Heart right ventricle (tissue), 16 donors: ENCODE measurements at regions of chr2 and their contacts with region 1.

Region 1: DNA sequence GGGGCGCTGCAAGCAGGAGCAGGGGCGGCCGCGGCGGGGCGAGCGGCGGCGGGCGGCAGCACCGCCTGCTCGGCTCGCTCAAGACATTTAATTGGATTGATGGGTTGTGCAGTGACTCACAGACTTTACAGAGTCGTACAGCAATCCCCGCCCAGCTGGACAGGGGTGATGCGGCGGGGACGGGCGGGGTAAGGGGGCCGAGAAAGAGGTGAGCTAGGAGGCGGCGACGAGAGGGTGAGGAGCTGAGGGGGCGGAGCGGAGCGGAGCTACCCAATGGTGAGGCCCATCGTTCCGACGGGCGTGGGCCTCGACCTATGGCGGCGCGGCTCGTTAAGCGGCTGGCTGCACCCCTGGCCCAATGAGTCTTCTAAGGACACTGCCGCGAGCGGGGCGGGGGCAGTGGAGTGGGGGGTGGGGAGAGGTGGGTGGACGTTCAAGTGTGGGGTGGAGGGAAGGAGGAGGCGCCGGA is 97.1 kb upstream of the SERTAD2 start:
- DNase-seq: peak; percentile 99
- ATAC-seq: peak; percentile 90 to 97 (median 94)
- H3K4me3 ChIP-seq: peak overlapping the region; percentile 59 to 94 (median 74)
- H3K27ac ChIP-seq: peak overlapping the region; percentile 82 to 100 (median 96)
- H3K4me1 ChIP-seq: peaks cover 0 to 34% (median 19%) of the 10 kb centered on the region in 9 donors
- H3K27me3 ChIP-seq: no peaks in the 10 kb centered on the region
- CTCF ChIP-seq: peak in 3 of 9 donors; percentile 37 to 53 (median 40)

Region 2: GRCh38 chr2:64523666-64524603 is 226.9 kb before region 1 on chr2 and contains the start of gene AFTPH:
- intact Hi-C with region 1: loop called in 1 of 10 experiments (anchors 5 kb)
- DNase-seq: peak; percentile 99
- ATAC-seq: peak; percentile 99 to 100 (median 100)
- H3K4me3 ChIP-seq: peak within 1 kb of the TSS; percentile 74 to 98 (median 92)
- H3K27ac ChIP-seq: peak within 1 kb of the TSS; percentile 75 to 98 (median 94)
- H3K4me1 ChIP-seq: peaks cover 0 to 49% (median 34%) of the 10 kb centered on the region in 9 donors
- H3K27me3 ChIP-seq: no peaks in the 10 kb centered on the region
- CTCF ChIP-seq: peak in 1 of 9 donors; percentile 13
- total RNA-seq, gene AFTPH: 9.8 to 12.8 (median 11.0) TPM

Region 3: GRCh38 chr2:64653349-64654062 is 97.3 kb before region 1 on chr2 and contains the start of gene SERTAD2:
- intact Hi-C with region 1: loop called in 8 of 10 experiments (anchors 1 to 5 kb)
- DNase-seq: peak; percentile 90 to 92
- ATAC-seq: peak; percentile 89 to 93 (median 92)
- H3K4me3 ChIP-seq: peak within 1 kb of the TSS; percentile 65 to 99 (median 87)
- H3K27ac ChIP-seq: peak within 1 kb of the TSS; percentile 92 to 100 (median 99)
- H3K4me1 ChIP-seq: peaks cover 0 to 75% (median 57%) of the 10 kb centered on the region in 9 donors
- H3K27me3 ChIP-seq: no peaks in the 10 kb centered on the region
- CTCF ChIP-seq: peak in 6 of 9 donors; percentile 4 to 31 (median 24)
- total RNA-seq, gene SERTAD2: 11.3 to 20.9 (median 16.6) TPM

Region 4: DNA sequence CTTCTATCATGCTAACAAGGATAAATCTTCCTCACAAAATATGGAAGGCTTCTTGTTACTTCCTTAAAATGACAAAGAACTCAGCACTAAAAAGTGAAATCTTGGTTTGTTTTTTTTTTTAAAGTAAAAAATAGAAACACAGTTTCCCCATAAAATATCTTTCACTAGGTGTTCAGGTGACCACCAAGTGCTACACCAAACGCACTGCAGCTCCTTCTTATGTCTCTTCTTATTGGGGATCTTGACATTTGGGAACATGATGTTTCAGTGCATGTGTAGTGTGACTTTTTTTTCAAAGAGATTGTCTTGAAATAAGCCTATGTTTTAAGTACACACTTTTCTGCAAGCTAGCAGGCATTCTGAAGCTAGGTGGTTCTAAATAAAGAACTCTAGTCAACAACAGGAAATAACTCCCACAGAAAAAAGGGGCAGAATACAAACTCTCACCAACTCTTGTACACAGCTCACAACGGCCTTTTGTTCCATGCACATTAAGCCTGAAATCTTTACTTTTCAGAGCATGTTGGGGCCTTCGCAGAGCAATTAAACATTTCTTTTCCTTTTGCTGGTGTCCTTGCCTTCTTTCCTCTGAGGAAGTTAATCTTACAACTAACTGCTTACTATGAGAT is 83.9 kb before region 1 on chr2:
- intact Hi-C with region 1: loop called in 1 of 10 experiments (anchors 10 kb)
- DNase-seq: no peak
- ATAC-seq: peak in 2 of 8 donors; percentile 39 to 44
- H3K4me3 ChIP-seq: no peak overlapping the region
- H3K27ac ChIP-seq: peak overlapping the region in 4 of 10 donors; percentile 35 to 68 (median 48)
- H3K4me1 ChIP-seq: peaks cover 0 to 29% (median 17%) of the 10 kb centered on the region in 9 donors
- H3K27me3 ChIP-seq: no peaks in the 10 kb centered on the region
- CTCF ChIP-seq: no peak

Region 5: GRCh38 chr2:64767670-64768468 is 17.0 kb after region 1 on chr2:
- intact Hi-C with region 1: loop called in 5 of 10 experiments (anchors 1 to 2 kb)
- DNase-seq: peak; percentile 89 to 94
- ATAC-seq: peak; percentile 95 to 99 (median 96)
- H3K4me3 ChIP-seq: peak overlapping the region; percentile 26 to 75 (median 70)
- H3K27ac ChIP-seq: peak overlapping the region; percentile 95 to 99 (median 98)
- H3K4me1 ChIP-seq: peaks cover 0 to 36% (median 17%) of the 10 kb centered on the region in 9 donors
- H3K27me3 ChIP-seq: no peaks in the 10 kb centered on the region
- CTCF ChIP-seq: peak in 2 of 9 donors; percentile 10 to 35

Region 6: GRCh38 chr2:64807417-64807816 is 56.6 kb after region 1 on chr2:
- intact Hi-C with region 1: no loop called
- DNase-seq: no peak
- ATAC-seq: peak in 1 of 8 donors; percentile 41
- H3K4me3 ChIP-seq: no peak overlapping the region
- H3K27ac ChIP-seq: no peak overlapping the region
- H3K4me1 ChIP-seq: peaks cover 0 to 11% (median 7%) of the 10 kb centered on the region in 9 donors
- H3K27me3 ChIP-seq: no peaks in the 10 kb centered on the region
- CTCF ChIP-seq: no peak

Region 7: GRCh38 chr2:64831134-64831976 is 80.5 kb after region 1 on chr2:
- intact Hi-C with region 1: loop called in 4 of 10 experiments (anchors 2 to 10 kb)
- DNase-seq: peak; percentile 80 to 82
- ATAC-seq: peak; percentile 86 to 98 (median 94)
- H3K4me3 ChIP-seq: peak overlapping the region in 2 of 10 donors; percentile 15 to 23
- H3K27ac ChIP-seq: peak overlapping the region in 9 of 10 donors; percentile 11 to 87 (median 70)
- H3K4me1 ChIP-seq: peaks cover 0 to 17% (median 11%) of the 10 kb centered on the region in 9 donors
- H3K27me3 ChIP-seq: no peaks in the 10 kb centered on the region
- CTCF ChIP-seq: peak; percentile 83 to 95 (median 89)

Region 8: GRCh38 chr2:64859312-64860212 is 108.7 kb after region 1 on chr2:
- intact Hi-C with region 1: loop called in 6 of 10 experiments (anchors 1 to 5 kb)
- DNase-seq: peak; percentile 89 to 90
- ATAC-seq: peak; percentile 82 to 91 (median 84)
- H3K4me3 ChIP-seq: peak overlapping the region; percentile 22 to 62 (median 53)
- H3K27ac ChIP-seq: peak overlapping the region; percentile 84 to 99 (median 94)
- H3K4me1 ChIP-seq: peaks cover 23 to 91% (median 37%) of the 10 kb centered on the region in 9 donors
- H3K27me3 ChIP-seq: no peaks in the 10 kb centered on the region
- CTCF ChIP-seq: peak in 1 of 9 donors; percentile 11